ENCODE measurements at regions of chr5 and their contacts with region 1.

Region 1: GRCh38 chr5:141564216-141564692 is 54.5 kb downstream of the DIAPH1 start:
- DNase-seq: peak; percentile 95 to 97 (median 97)
- H3K4me3 ChIP-seq: peak overlapping the region in 1 of 7 experiments; percentile 4
- H3K27ac ChIP-seq: no peak overlapping the region
- H3K4me1 ChIP-seq: peaks cover 0 to 10% (median 3%) of the 10 kb centered on the region in 4 experiments
- H3K27me3 ChIP-seq: no peaks in the 10 kb centered on the region

Region 2: GRCh38 chr5:141369994-141370848 is 194.0 kb before region 1 on chr5 and contains the start of gene PCDHGB3:
- CTCF ChIA-PET with region 1: interaction called, 11 read pairs
- POLR2A ChIA-PET with region 1: no interaction called
- DNase-seq: peak; percentile 65 to 85 (median 80)
- H3K4me3 ChIP-seq: peak within 1 kb of the TSS; percentile 40 to 78 (median 59)
- H3K27ac ChIP-seq: no peak within 1 kb of the TSS
- H3K4me1 ChIP-seq: peaks cover 0 to 6% (median under 1%) of the 10 kb centered on the region in 4 experiments
- H3K27me3 ChIP-seq: peaks cover 13 to 82% (median 23%) of the 10 kb centered on the region in 5 experiments

Region 3: DNA sequence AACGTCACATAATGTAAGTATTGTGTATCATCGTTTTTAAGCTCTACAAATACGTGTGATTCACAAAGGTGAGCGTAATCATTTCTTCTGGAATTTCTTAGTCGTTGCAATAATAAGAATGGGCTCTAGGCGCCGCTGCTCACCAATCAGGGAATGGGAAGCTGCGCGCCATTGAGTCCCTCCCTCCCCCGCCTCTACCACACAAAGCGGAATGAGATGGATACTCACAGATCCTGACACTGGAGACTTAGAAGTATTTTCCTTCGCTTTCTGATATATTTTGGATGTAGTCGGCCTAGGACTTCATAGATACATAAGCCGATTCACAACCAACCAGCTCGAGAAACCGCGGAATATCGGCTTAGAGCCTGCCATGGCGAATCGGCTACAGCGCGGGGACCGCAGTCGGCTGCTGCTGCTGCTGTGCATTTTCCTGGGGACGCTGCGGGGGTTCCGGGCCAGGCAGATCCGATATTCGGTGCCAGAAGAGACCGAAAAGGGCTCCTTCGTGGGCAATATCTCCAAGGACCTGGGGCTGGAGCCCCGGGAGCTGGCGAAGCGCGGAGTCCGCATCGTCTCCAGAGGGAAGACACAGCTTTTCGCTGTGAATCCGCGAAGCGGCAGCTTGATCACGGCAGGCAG is 143.3 kb before region 1 on chr5 and contains the start of gene PCDHGA11:
- CTCF ChIA-PET with region 1: interaction called, 65 read pairs
- POLR2A ChIA-PET with region 1: no interaction called
- DNase-seq: peak; percentile 75 to 81 (median 80)
- H3K4me3 ChIP-seq: peak within 1 kb of the TSS; percentile 36 to 81 (median 63)
- H3K27ac ChIP-seq: no peak within 1 kb of the TSS
- H3K4me1 ChIP-seq: peaks cover 0 to 18% (median 9%) of the 10 kb centered on the region in 4 experiments
- H3K27me3 ChIP-seq: peaks cover 30 to 89% (median 37%) of the 10 kb centered on the region in 5 experiments

Region 4: GRCh38 chr5:141512390-141512910 is 51.8 kb before region 1 on chr5:
- CTCF ChIA-PET with region 1: interaction called, 20 read pairs
- POLR2A ChIA-PET with region 1: no interaction called
- DNase-seq: peak; percentile 81 to 83 (median 82)
- H3K4me3 ChIP-seq: peak overlapping the region in 6 of 7 experiments; percentile 51 to 93 (median 70)
- H3K27ac ChIP-seq: no peak overlapping the region
- H3K4me1 ChIP-seq: peaks cover 18 to 47% (median 44%) of the 10 kb centered on the region in 4 experiments
- H3K27me3 ChIP-seq: no peaks in the 10 kb centered on the region

Region 5: GRCh38 chr5:141618804-141619554 is 54.7 kb after region 1 on chr5 and contains the start of gene DIAPH1:
- CTCF ChIA-PET with region 1: interaction called, 15 read pairs
- POLR2A ChIA-PET with region 1: no interaction called
- DNase-seq: peak; percentile 97 to 99 (median 99)
- H3K4me3 ChIP-seq: peak within 1 kb of the TSS; percentile 72 to 95 (median 86)
- H3K27ac ChIP-seq: peak within 1 kb of the TSS; percentile 69 to 90
- H3K4me1 ChIP-seq: peaks cover 22 to 44% (median 28%) of the 10 kb centered on the region in 4 experiments
- H3K27me3 ChIP-seq: no peaks in the 10 kb centered on the region

Measured in common myeloid progenitor, CD34-positive (primary cell).